Naive thymus-derived CD4-positive, alpha-beta T cell (primary cell): ENCODE measurements at regions of chr7 and their contacts with region 1.

Region 1: GRCh38 chr7:91880413-91881241 is at the start of gene MTERF1:
- DNase-seq: peak; percentile 85 to 93 (median 91)
- ATAC-seq: peak; percentile 100
- H3K4me3 ChIP-seq: peak within 1 kb of the TSS; percentile 84
- H3K4me3 Mint-ChIP-seq: peak within 1 kb of the TSS; percentile 88 to 100 (median 98)
- H3K27ac ChIP-seq: peak within 1 kb of the TSS; percentile 72
- H3K27ac Mint-ChIP-seq: peak within 1 kb of the TSS; percentile 89 to 98 (median 96)
- H3K4me1 ChIP-seq: peaks cover 0 to 8% of the 10 kb centered on the region in 2 donors
- H3K4me1 Mint-ChIP-seq: peaks cover 31 to 53% (median 39%) of the 10 kb centered on the region in 7 donors
- H3K27me3 ChIP-seq: no peaks in the 10 kb centered on the region
- H3K27me3 Mint-ChIP-seq: peaks cover 0 to 9% (median 0%) of the 10 kb centered on the region in 5 donors
- total RNA-seq, gene MTERF1: 9.6 to 32.7 (median 17.8) TPM

Region 2: GRCh38 chr7:91082852-91083495 is 797.7 kb before region 1 on chr7:
- CTCF ChIA-PET with region 1: interaction called, 4 read pairs
- POLR2A ChIA-PET with region 1: interaction called, 4 read pairs
- intact Hi-C with region 1: loop called (anchors 1 to 2 kb)
- DNase-seq: peak in 4 of 9 donors; percentile 39 to 55 (median 44)
- ATAC-seq: peak; percentile 47
- H3K4me3 ChIP-seq: no peak overlapping the region
- H3K4me3 Mint-ChIP-seq: peak overlapping the region in 9 of 10 donors; percentile 56 to 83 (median 68)
- H3K27ac ChIP-seq: no peak overlapping the region
- H3K27ac Mint-ChIP-seq: peak overlapping the region in 8 of 9 donors; percentile 71 to 96 (median 90)
- H3K4me1 ChIP-seq: peaks cover 0 to 27% of the 10 kb centered on the region in 2 donors
- H3K4me1 Mint-ChIP-seq: peaks cover 18 to 48% (median 39%) of the 10 kb centered on the region in 7 donors
- H3K27me3 ChIP-seq: no peaks in the 10 kb centered on the region
- H3K27me3 Mint-ChIP-seq: peaks cover 0 to 2% (median 0%) of the 10 kb centered on the region in 5 donors

Region 3: GRCh38 chr7:91801331-91801983 is 79.2 kb before region 1 on chr7:
- CTCF ChIA-PET with region 1: no interaction called
- POLR2A ChIA-PET with region 1: no interaction called
- intact Hi-C with region 1: no loop called
- DNase-seq: no peak
- ATAC-seq: peak; percentile 20
- H3K4me3 ChIP-seq: no peak overlapping the region
- H3K4me3 Mint-ChIP-seq: no peak overlapping the region
- H3K27ac ChIP-seq: no peak overlapping the region
- H3K27ac Mint-ChIP-seq: no peak overlapping the region
- H3K4me1 ChIP-seq: no peaks in the 10 kb centered on the region
- H3K4me1 Mint-ChIP-seq: no peaks in the 10 kb centered on the region
- H3K27me3 ChIP-seq: no peaks in the 10 kb centered on the region
- H3K27me3 Mint-ChIP-seq: no peaks in the 10 kb centered on the region

Region 4: GRCh38 chr7:91826377-91826776 is 54.2 kb before region 1 on chr7:
- CTCF ChIA-PET with region 1: interaction called, 6 read pairs
- POLR2A ChIA-PET with region 1: no interaction called
- intact Hi-C with region 1: loop called (anchors 1 kb)
- DNase-seq: no peak
- ATAC-seq: no peak
- H3K4me3 ChIP-seq: no peak overlapping the region
- H3K4me3 Mint-ChIP-seq: no peak overlapping the region
- H3K27ac ChIP-seq: no peak overlapping the region
- H3K27ac Mint-ChIP-seq: no peak overlapping the region
- H3K4me1 ChIP-seq: no peaks in the 10 kb centered on the region
- H3K4me1 Mint-ChIP-seq: no peaks in the 10 kb centered on the region
- H3K27me3 ChIP-seq: no peaks in the 10 kb centered on the region
- H3K27me3 Mint-ChIP-seq: peaks cover 0 to 6% (median 0%) of the 10 kb centered on the region in 5 donors

Region 5: DNA sequence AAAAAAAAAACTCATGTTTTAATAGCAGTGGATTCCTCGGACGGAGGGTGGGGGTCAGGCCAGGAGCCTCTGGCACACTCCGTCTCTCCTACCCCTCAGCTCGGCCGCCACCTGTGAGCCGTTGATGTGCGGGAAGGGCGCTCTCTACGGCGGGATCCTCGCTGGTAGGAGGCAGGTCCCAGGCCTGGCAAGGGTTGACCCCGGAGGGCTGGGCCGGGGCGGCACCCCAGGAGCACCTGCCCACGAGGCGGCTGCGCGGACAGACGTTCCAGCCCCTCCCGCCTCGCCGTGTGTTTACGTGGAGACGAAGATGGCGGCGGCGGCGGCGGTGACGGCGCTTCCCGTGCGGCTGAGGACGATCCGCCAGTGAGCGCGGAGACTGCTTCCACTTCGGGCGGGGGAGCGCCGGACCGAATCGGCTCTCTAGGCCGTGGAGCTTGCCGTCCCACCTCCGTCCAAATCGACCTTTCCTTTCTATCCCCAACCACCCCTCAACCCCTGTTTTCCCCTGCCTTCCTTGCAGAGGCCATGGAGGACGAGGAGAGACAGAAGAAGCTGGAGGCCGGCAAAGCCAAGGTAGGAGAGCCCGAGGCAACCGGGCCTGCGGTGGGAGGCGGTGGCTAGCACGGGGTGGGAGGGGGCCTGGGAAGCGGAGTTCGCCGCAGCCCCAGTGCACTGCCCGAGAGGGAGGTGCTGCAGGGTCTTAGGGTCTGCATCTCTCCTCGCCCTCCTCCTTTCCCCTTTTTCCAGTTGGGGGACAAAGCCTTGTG is 60.1 kb after region 1 on chr7 and contains the start of gene AKAP9:
- CTCF ChIA-PET with region 1: interaction called, 4 read pairs
- POLR2A ChIA-PET with region 1: interaction called, 19 read pairs
- intact Hi-C with region 1: loop called (anchors 1 kb)
- DNase-seq: peak; percentile 79 to 89 (median 88)
- ATAC-seq: peak; percentile 93
- H3K4me3 ChIP-seq: peak within 1 kb of the TSS; percentile 97
- H3K4me3 Mint-ChIP-seq: peak within 1 kb of the TSS; percentile 85 to 98 (median 92)
- H3K27ac ChIP-seq: peak within 1 kb of the TSS; percentile 93
- H3K27ac Mint-ChIP-seq: peak within 1 kb of the TSS; percentile 90 to 98 (median 95)
- H3K4me1 ChIP-seq: peaks cover 15 to 16% of the 10 kb centered on the region in 2 donors
- H3K4me1 Mint-ChIP-seq: peaks cover 28 to 54% (median 44%) of the 10 kb centered on the region in 7 donors
- H3K27me3 ChIP-seq: no peaks in the 10 kb centered on the region
- H3K27me3 Mint-ChIP-seq: peaks cover 0 to 2% (median 0%) of the 10 kb centered on the region in 5 donors
- total RNA-seq, gene AKAP9: 50.0 to 93.5 (median 66.1) TPM

Region 6: DNA sequence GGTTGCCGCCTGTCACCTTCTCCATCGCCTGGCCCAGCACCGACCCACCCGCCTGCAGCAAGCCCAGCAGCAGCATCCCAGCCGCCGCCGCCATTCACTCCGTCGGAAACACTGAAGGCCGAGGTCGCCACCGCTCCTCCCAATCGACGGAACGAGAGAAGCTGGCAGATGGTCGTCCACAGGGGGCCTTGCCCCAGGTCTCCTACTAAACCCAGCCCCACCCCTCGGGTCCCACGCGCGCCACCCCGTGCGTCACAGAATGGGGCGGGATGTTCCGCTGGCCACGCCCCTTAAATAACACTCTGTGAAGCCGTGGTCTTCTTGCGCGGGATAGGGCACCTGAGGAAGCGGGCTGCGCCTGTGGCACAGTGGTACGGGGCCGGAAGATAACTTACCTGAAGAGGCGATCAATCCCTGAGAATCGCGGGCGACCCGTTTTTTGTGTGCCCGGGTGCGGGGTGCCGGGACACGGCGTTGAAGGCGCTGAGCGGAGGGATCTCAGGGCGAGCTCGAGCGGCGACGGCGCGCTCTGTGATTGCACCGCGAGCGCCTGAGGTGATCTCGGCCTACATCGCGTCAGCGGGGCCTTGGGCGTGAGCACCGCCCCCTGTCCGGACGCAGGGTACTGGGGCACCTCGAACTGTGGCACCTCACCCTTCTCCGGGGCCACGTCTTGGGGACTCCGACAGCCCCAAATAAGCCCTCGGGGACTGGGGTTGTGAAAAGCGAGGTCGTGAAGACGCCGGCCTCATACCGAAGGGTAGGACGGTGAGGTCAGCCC is 253.8 kb after region 1 on chr7 and contains the start of gene CYP51A1:
- CTCF ChIA-PET with region 1: no interaction called
- POLR2A ChIA-PET with region 1: no interaction called
- intact Hi-C with region 1: loop called (anchors 1 to 2 kb)
- DNase-seq: peak; percentile 93 to 98 (median 96)
- ATAC-seq: peak; percentile 93
- H3K4me3 ChIP-seq: peak within 1 kb of the TSS; percentile 92
- H3K4me3 Mint-ChIP-seq: peak within 1 kb of the TSS; percentile 95 to 100 (median 98)
- H3K27ac ChIP-seq: peak within 1 kb of the TSS; percentile 94
- H3K27ac Mint-ChIP-seq: peak within 1 kb of the TSS; percentile 89 to 100 (median 99)
- H3K4me1 ChIP-seq: peaks cover 4 to 12% of the 10 kb centered on the region in 2 donors
- H3K4me1 Mint-ChIP-seq: peaks cover 12 to 49% (median 40%) of the 10 kb centered on the region in 7 donors
- H3K27me3 ChIP-seq: no peaks in the 10 kb centered on the region
- H3K27me3 Mint-ChIP-seq: peaks cover 0 to 2% (median 0%) of the 10 kb centered on the region in 5 donors
- total RNA-seq, gene CYP51A1: 14.7 to 36.6 (median 21.7) TPM

Region 7: GRCh38 chr7:92245487-92246362 is 365.1 kb after region 1 on chr7 and contains the starts of genes ANKIB1 and KRIT1:
- CTCF ChIA-PET with region 1: no interaction called
- POLR2A ChIA-PET with region 1: interaction called, 4 read pairs
- intact Hi-C with region 1: loop called (anchors 1 to 2 kb)
- DNase-seq: peak; percentile 68 to 88 (median 86)
- ATAC-seq: peak; percentile 87
- H3K4me3 ChIP-seq: peak within 1 kb of the TSS; percentile 80
- H3K4me3 Mint-ChIP-seq: peak within 1 kb of the TSS; percentile 97 to 100 (median 98)
- H3K27ac ChIP-seq: peak within 1 kb of the TSS; percentile 92
- H3K27ac Mint-ChIP-seq: peak within 1 kb of the TSS; percentile 98 to 100 (median 100)
- H3K4me1 ChIP-seq: peaks cover 15 to 22% of the 10 kb centered on the region in 2 donors
- H3K4me1 Mint-ChIP-seq: peaks cover 30 to 64% (median 45%) of the 10 kb centered on the region in 7 donors
- H3K27me3 ChIP-seq: no peaks in the 10 kb centered on the region
- H3K27me3 Mint-ChIP-seq: no peaks in the 10 kb centered on the region
- total RNA-seq, gene ANKIB1: 54.8 to 98.6 (median 68.2) TPM
- total RNA-seq, gene KRIT1: 45.7 to 78.7 (median 48.6) TPM

Region 8: DNA sequence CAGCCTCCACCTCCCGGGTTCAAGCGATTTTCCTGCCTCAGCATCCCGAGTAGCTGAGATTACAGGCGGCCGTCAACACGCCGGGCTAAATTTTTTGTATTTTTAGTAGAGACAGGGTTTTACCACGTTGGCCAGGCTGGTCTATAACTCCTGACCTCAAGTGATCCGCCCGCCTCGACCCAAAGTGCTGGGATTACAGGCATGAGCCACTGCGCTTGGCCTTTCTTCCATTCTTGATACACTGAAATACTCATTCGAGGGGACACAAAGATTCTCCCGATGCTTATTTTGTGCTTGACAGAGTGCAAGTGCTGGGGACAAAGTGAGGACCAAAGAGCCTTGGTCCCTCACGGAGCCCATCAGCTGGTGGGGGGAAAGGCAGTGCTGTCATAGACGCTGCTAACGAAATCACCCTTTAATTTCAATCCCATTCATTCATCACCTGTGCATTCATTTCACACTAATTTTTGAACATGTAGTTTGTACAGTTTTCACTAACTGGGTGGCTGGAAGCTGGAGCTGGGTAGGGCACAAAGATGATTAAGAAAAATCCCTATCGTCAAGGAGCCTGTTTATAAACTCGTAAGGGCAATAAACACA is 710.2 kb after region 1 on chr7:
- CTCF ChIA-PET with region 1: no interaction called
- POLR2A ChIA-PET with region 1: no interaction called
- intact Hi-C with region 1: loop called (anchors 1 to 2 kb)
- DNase-seq: peak in 1 of 9 donors; percentile 11
- ATAC-seq: no peak
- H3K4me3 ChIP-seq: peak overlapping the region; percentile 77
- H3K4me3 Mint-ChIP-seq: peak overlapping the region; percentile 90 to 96 (median 94)
- H3K27ac ChIP-seq: peak overlapping the region; percentile 94
- H3K27ac Mint-ChIP-seq: peak overlapping the region in 8 of 9 donors; percentile 22 to 96 (median 76)
- H3K4me1 ChIP-seq: peaks cover 14 to 21% of the 10 kb centered on the region in 2 donors
- H3K4me1 Mint-ChIP-seq: peaks cover 27 to 46% (median 39%) of the 10 kb centered on the region in 7 donors
- H3K27me3 ChIP-seq: no peaks in the 10 kb centered on the region
- H3K27me3 Mint-ChIP-seq: peaks cover 0 to 4% (median 0%) of the 10 kb centered on the region in 5 donors